ENCODE measurements at regions of chr6 and their contacts with region 1.

Region 1: GRCh38 chr6:99746261-99746895 is 139.7 kb downstream of the PRDM13 start:
- DNase-seq: peak; percentile 70 to 87 (median 80)
- H3K4me3 ChIP-seq: no peak overlapping the region
- H3K27ac ChIP-seq: no peak overlapping the region
- H3K4me1 ChIP-seq: no peaks in the 10 kb centered on the region
- H3K27me3 ChIP-seq: peaks cover 3 to 11% (median 8%) of the 10 kb centered on the region in 5 experiments

Region 2: DNA sequence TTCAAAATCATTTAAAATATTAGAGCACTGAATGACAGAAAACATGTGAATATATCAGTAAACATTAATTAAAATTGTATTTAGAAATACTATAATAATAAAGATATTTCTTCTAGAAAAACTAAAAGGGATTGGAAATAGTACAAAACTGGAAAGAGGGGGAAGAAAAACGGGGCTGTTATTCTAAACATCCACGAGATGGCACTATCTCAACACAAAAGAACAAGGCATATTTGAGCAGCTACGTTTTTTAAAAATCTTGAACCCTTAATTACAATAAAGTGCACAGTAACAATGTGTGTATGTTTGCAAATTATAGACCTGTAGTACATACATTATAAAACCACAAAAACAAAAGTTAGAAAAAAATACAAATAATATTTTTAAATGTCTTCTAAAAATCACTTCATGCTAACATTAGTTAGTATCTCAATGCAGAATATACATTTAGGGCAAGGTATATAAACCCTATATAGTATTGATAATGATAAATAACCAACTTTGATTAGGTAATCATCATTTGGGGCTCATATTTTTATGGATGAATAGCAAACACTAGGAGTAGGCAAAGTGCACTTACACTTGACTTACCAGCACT is 278.8 kb before region 1 on chr6:
- CTCF ChIA-PET with region 1: interaction called, 20 read pairs
- POLR2A ChIA-PET with region 1: no interaction called
- DNase-seq: peak; percentile 29 to 47 (median 35)
- H3K4me3 ChIP-seq: no peak overlapping the region
- H3K27ac ChIP-seq: no peak overlapping the region
- H3K4me1 ChIP-seq: no peaks in the 10 kb centered on the region
- H3K27me3 ChIP-seq: no peaks in the 10 kb centered on the region

Measured in common myeloid progenitor, CD34-positive (primary cell).